ENCODE measurements at regions of chr1 and their contacts with region 1.

Region 1: DNA sequence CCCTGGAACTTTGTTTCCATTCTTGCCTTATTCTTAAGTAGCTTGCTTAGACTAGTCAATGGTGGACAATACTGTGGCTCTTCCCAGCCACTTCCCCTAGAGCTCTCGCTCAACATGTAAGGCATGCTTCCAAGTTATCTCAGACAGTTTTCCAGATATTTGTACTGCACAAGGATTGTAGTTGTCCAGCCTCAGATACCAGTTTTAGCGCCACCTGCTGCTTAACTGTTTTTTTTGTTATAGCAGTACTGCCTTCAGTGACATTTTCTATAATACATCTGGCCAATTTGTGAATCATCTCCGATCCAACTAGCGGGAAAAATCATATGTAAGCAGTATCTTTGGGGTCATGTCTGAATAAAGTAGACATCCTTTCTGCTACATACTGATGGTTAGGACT is 346.7 kb upstream of the ADGRL4 start:
- DNase-seq: peak; percentile 2
- ATAC-seq: peak; percentile 71
- H3K4me3 ChIP-seq: no peak overlapping the region
- H3K27ac ChIP-seq: no peak overlapping the region
- H3K4me1 ChIP-seq: no peaks in the 10 kb centered on the region
- H3K27me3 ChIP-seq: no peaks in the 10 kb centered on the region
- CTCF ChIP-seq: peak; percentile 42
- EP300 ChIP-seq: no peak
- POLR2A ChIP-seq: no peak
- RAD21 ChIP-seq: no peak

Region 2: DNA sequence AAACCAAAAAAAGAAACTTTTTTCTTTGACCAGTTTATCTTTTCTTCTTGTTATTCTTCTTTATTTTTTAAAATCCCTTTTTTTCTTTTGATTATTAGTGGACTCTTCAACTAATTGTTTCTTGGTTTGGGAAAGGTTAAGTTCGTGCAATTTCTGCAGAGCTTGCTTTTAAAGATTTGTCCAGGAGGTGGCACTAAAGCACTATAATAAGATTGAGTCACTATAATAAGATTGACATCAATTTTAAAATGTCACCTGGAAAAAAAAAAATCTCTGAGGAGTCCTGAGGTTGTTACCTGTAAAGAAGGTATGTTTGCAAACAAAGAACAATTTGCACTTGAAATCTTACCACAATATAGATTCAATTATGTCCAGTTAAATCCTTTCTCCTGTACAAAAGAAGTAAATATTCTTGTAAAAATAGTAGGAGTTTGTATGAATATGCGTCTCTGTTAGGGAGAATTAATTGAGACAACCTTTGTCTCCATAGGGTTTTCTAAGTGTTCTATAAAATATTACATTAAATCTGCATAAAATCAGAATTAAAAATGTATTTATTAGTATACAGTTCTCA is 513.4 kb before region 1 on chr1:
- CTCF ChIA-PET with region 1: interaction called, 14 read pairs
- POLR2A ChIA-PET with region 1: no interaction called
- in situ Hi-C with region 1: loop called (anchors 25 kb)
- intact Hi-C with region 1: no loop called
- DNase-seq: peak; percentile 23
- ATAC-seq: no peak
- H3K4me3 ChIP-seq: no peak overlapping the region
- H3K27ac ChIP-seq: no peak overlapping the region
- H3K4me1 ChIP-seq: no peaks in the 10 kb centered on the region
- H3K27me3 ChIP-seq: no peaks in the 10 kb centered on the region
- CTCF ChIP-seq: peak; percentile 54
- EP300 ChIP-seq: no peak
- POLR2A ChIP-seq: no peak
- RAD21 ChIP-seq: no peak

Region 3: GRCh38 chr1:79259388-79260336 is 93.6 kb before region 1 on chr1:
- CTCF ChIA-PET with region 1: interaction called, 4 read pairs
- POLR2A ChIA-PET with region 1: no interaction called
- in situ Hi-C with region 1: no loop called
- intact Hi-C with region 1: loop called (anchors 1 kb)
- DNase-seq: no peak
- ATAC-seq: peak; percentile 35; the same call in 1 of the 3 replicates
- H3K4me3 ChIP-seq: no peak overlapping the region
- H3K27ac ChIP-seq: no peak overlapping the region
- H3K4me1 ChIP-seq: no peaks in the 10 kb centered on the region
- H3K27me3 ChIP-seq: no peaks in the 10 kb centered on the region
- CTCF ChIP-seq: peak; percentile 19; the same call in 1 of the 2 replicates
- EP300 ChIP-seq: no peak
- POLR2A ChIP-seq: no peak
- RAD21 ChIP-seq: no peak

Region 4: DNA sequence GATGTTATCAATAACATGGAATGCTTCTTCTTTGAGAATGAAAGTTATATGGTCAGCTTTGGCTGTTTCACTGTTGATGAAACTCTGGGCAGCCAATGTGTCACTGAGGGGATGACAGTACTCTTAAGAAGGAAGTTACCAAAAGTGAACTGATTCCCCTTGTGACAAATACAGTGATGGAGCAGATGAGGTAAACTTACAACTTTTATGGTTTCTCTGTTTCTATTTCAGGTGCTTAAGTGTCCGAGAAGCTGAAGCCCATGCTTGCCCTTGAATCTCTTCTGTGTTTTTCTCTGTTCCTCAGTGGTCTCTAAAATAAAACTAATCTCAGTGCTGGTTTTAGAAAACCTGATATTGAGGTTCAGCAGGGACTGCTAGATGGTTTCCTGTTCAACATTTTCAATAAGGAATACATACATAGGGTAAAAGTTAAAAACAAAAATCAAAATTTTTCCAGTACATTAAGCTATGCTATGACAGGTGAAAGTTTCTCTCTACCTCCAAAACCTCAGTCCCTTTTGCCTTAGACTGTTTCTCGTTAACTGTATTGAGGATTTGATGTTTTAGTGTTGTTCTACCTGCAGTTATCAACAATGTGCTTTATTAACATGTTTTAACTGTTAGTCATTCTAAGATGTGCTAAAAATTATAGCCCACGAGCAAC is 107.7 kb after region 1 on chr1:
- CTCF ChIA-PET with region 1: no interaction called
- POLR2A ChIA-PET with region 1: no interaction called
- in situ Hi-C with region 1: no loop called
- intact Hi-C with region 1: no loop called
- DNase-seq: no peak
- ATAC-seq: no peak
- H3K4me3 ChIP-seq: no peak overlapping the region
- H3K27ac ChIP-seq: no peak overlapping the region
- H3K4me1 ChIP-seq: no peaks in the 10 kb centered on the region
- H3K27me3 ChIP-seq: no peaks in the 10 kb centered on the region
- CTCF ChIP-seq: no peak
- EP300 ChIP-seq: no peak
- POLR2A ChIP-seq: no peak
- RAD21 ChIP-seq: no peak

Region 5: DNA sequence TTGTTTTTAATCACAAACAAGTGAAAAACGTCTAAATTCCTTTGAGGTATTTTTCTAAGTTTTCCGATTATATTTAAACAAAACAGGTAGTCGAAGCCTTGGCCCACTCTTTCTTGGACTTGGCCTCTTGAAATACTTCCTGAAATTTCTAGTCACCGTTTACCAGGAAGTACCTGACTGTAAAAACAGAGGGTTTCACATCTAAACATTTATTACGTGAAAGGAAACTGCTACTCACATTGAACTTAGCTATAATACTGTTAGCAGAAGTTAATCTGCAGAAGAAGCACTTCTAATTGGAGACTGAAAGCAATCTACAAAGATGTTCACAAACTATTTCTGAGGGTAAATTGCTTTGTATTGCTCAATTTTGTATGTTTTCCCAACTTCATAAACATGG is 179.3 kb after region 1 on chr1:
- CTCF ChIA-PET with region 1: no interaction called
- POLR2A ChIA-PET with region 1: no interaction called
- in situ Hi-C with region 1: no loop called
- intact Hi-C with region 1: no loop called
- DNase-seq: no peak
- ATAC-seq: no peak
- H3K4me3 ChIP-seq: no peak overlapping the region
- H3K27ac ChIP-seq: no peak overlapping the region
- H3K4me1 ChIP-seq: no peaks in the 10 kb centered on the region
- H3K27me3 ChIP-seq: no peaks in the 10 kb centered on the region
- CTCF ChIP-seq: no peak
- EP300 ChIP-seq: no peak
- POLR2A ChIP-seq: no peak
- RAD21 ChIP-seq: no peak

Region 6: DNA sequence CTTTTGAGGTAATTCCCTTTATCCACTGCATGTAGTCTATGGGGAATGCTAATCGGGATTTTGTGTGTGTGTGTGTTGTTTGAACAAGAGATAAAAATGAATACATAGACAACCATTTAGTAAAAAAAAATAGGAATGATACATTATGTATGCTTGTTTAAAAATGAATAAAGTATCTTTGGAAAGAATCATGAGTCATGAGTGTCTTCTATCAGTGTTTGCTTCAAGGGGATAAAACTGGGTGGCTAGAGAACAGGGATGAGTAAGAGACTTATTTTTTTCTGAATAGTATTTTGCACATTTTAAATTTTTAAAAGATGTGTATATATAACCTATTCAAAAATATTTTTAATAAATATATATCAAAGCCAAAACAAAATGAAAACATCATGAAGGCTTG is 492.7 kb after region 1 on chr1:
- CTCF ChIA-PET with region 1: no interaction called
- POLR2A ChIA-PET with region 1: no interaction called
- in situ Hi-C with region 1: no loop called
- intact Hi-C with region 1: no loop called
- DNase-seq: no peak
- ATAC-seq: no peak
- H3K4me3 ChIP-seq: no peak overlapping the region
- H3K27ac ChIP-seq: no peak overlapping the region
- H3K4me1 ChIP-seq: no peaks in the 10 kb centered on the region
- H3K27me3 ChIP-seq: no peaks in the 10 kb centered on the region
- CTCF ChIP-seq: no peak
- EP300 ChIP-seq: no peak
- POLR2A ChIP-seq: no peak
- RAD21 ChIP-seq: no peak